ENCODE measurements at regions of chr22 and their contacts with region 1.

Region 1: DNA sequence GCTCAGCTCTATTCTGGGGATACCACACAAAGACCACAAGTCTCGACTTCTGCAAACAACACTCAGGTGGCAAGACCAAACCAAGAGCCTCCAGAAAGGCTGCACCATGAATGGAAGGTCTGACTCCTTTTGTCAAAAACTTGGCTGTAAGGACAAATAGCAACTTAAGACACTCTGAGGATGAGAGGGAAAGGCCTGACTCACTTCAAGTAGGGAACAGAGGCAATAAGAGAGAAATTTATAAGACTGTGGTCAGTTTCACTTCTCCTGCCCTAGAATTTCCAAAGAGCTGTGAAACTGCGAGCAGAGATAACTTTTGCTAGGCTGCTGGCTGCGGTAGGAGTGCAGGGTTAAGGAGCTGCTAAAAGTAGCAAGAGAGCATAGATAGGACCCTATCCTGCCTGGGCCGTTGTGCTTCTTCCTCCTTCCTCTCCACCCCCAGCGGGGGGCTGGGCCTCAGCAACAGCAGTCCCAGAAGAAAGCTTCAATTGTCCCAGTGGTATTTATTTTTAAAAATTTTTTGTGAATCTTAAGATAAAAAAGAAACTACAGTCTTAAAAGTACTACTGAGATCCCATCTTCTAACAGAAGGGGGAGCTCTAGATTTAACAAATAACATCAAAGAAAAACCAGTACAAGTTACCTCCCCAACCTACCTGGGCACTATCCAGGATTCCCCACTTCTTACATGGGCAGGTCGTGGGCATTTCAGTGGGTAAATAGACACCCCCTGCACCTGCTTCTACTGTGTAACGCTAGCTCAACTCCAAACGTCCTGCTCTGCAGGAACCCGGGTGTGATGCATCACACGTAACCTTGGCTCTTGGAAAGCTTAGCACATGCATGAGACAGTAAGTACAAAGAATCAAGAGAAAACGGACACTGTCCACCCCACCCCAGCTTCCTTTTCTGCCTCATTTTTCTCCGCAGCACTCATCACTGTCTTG is 66.4 kb downstream of the SGSM3 start:
- DNase-seq: peak; percentile 88
- ATAC-seq: peak; percentile 87
- H3K4me3 ChIP-seq: peak overlapping the region; percentile 50
- H3K27ac ChIP-seq: peak overlapping the region; percentile 84
- H3K4me1 ChIP-seq: peaks cover 72% of the 10 kb centered on the region
- H3K27me3 ChIP-seq: no peaks in the 10 kb centered on the region
- CTCF ChIP-seq: peak; percentile 45 to 52 (median 49); a peak in 5 of 6 replicates
- EP300 ChIP-seq: peak in 1 of 2 experiments; percentile 51; a peak in 3 of 4 replicates
- POLR2A ChIP-seq: no peak
- RAD21 ChIP-seq: peak; percentile 61

Region 2: DNA sequence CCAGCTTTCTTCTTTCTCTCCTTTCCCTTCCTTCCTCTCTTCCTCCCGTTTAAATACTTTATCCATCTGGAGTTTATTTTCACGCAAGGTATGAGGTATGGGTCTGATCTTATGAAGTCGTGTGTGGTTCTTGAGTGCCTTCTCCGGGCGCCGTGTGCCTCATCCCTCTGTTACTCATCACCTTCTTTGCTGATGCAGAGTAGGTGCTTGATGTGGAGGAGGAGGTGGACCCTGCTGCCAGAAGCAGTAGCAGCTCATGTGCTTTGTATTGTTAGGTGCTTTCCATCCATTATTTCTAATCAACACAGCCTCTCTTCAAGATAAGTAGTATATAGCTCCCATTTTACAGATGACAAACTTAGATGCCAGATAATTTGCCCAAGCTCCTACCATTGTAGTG is 212.1 kb before region 1 on chr22:
- CTCF ChIA-PET with region 1: no interaction called
- POLR2A ChIA-PET with region 1: no interaction called
- RAD21 ChIA-PET with region 1: no interaction called
- SMC1A ChIA-PET with region 1: no interaction called
- in situ Hi-C with region 1: no loop called
- intact Hi-C with region 1: no loop called
- DNase-seq: no peak
- ATAC-seq: no peak
- H3K4me3 ChIP-seq: no peak overlapping the region
- H3K27ac ChIP-seq: no peak overlapping the region
- H3K4me1 ChIP-seq: no peaks in the 10 kb centered on the region
- H3K27me3 ChIP-seq: no peaks in the 10 kb centered on the region
- CTCF ChIP-seq: no peak
- EP300 ChIP-seq: no peak
- POLR2A ChIP-seq: no peak
- RAD21 ChIP-seq: no peak

Region 3: DNA sequence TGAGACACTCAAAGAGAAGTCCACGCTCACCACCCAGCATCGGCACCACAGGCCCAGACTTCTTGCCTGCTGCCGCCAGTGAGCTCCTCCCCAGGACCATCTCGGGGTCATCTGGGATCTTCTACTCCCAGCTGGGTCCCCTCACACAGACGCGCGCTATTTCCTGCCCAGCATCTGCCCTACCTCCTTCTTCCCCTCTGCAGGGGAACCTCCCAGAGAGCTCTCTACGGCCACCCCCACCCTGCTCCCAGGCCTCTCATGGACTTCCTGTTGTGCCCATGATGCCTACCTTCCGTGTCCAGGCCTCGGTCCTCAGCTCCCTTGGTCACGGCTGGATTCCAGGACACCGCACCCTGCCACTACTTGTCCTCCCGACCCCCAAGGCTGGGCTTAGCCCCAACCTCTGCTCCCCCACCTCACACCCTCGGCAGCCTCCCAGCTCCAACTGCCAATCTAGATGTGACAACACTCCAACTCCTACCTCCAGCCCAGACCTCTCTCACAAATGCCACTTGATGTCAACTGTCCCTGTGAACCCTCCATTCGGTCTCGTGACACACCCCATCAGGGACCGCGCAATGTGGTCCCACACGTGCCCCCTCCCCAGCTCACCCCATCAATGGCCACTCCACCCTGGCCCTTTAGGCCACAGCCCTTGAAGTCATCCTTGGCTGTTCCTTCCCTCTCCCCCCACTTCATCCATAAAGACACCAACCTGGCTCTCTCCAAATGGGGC is 21.1 kb before region 1 on chr22:
- CTCF ChIA-PET with region 1: interaction called, 19 read pairs
- POLR2A ChIA-PET with region 1: interaction called, 13 read pairs
- RAD21 ChIA-PET with region 1: interaction called, 32 read pairs
- SMC1A ChIA-PET with region 1: interaction called, 21 read pairs
- in situ Hi-C with region 1: no loop called
- intact Hi-C with region 1: loop called (anchors 2 kb)
- DNase-seq: no peak
- ATAC-seq: peak; percentile 59
- H3K4me3 ChIP-seq: peak overlapping the region; percentile 49
- H3K27ac ChIP-seq: peak overlapping the region; percentile 71
- H3K4me1 ChIP-seq: peaks cover 44% of the 10 kb centered on the region
- H3K27me3 ChIP-seq: no peaks in the 10 kb centered on the region
- CTCF ChIP-seq: no peak
- EP300 ChIP-seq: no peak
- POLR2A ChIP-seq: no peak; the same call in none of the 2 replicates
- RAD21 ChIP-seq: no peak

Region 4: GRCh38 chr22:40468616-40469015 is 31.8 kb after region 1 on chr22:
- CTCF ChIA-PET with region 1: interaction called, 17 read pairs
- POLR2A ChIA-PET with region 1: interaction called, 3 read pairs
- RAD21 ChIA-PET with region 1: interaction called, 16 read pairs
- SMC1A ChIA-PET with region 1: interaction called, 30 read pairs
- in situ Hi-C with region 1: no loop called
- intact Hi-C with region 1: loop called (anchors 2 kb)
- DNase-seq: no peak
- ATAC-seq: no peak
- H3K4me3 ChIP-seq: no peak overlapping the region
- H3K27ac ChIP-seq: no peak overlapping the region
- H3K4me1 ChIP-seq: no peaks in the 10 kb centered on the region
- H3K27me3 ChIP-seq: no peaks in the 10 kb centered on the region
- CTCF ChIP-seq: no peak
- EP300 ChIP-seq: no peak
- POLR2A ChIP-seq: no peak
- RAD21 ChIP-seq: no peak

Region 5: DNA sequence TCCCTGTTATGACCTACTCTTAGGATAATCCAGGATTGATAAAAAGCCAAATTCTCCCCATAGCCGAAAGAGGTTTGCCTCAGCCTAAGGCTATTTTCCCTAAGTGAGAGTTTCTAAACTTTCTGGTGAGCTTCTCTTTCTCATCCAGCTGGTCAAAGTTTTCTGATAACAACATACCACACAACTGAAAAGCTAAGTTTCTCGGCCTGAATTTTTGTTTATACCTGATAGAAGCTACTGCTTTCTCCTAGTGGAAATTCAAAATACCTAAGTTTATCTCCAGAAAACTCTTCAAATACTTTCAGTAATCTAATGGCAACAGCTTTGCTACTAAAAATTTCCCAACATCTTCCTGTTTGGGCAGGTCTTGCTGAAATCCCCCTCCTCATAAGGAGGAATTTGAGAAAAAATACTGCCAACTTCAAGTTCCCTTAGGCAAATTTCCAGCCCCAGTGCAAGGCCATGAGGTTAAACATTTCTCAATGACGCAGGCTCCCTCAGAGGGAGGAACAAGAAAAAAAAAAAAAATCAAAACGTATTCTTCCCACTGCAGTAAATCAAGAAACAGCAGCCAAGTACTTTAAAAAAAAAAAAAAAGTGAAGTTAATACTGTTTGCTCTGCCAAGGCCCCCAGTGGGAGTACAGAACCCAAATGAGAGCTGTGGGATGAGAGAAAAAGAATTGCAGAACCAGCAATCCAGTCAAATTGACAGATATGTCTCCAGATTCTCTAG is 72.8 kb after region 1 on chr22:
- CTCF ChIA-PET with region 1: interaction called, 12 read pairs
- POLR2A ChIA-PET with region 1: interaction called, 3 read pairs
- RAD21 ChIA-PET with region 1: interaction called, 6 read pairs
- SMC1A ChIA-PET with region 1: interaction called, 5 read pairs
- in situ Hi-C with region 1: no loop called
- intact Hi-C with region 1: no loop called
- DNase-seq: no peak
- ATAC-seq: peak; percentile 73
- H3K4me3 ChIP-seq: no peak overlapping the region
- H3K27ac ChIP-seq: peak overlapping the region; percentile 10
- H3K4me1 ChIP-seq: peaks cover 10% of the 10 kb centered on the region
- H3K27me3 ChIP-seq: no peaks in the 10 kb centered on the region
- CTCF ChIP-seq: no peak
- EP300 ChIP-seq: no peak
- POLR2A ChIP-seq: no peak
- RAD21 ChIP-seq: no peak

Region 6: DNA sequence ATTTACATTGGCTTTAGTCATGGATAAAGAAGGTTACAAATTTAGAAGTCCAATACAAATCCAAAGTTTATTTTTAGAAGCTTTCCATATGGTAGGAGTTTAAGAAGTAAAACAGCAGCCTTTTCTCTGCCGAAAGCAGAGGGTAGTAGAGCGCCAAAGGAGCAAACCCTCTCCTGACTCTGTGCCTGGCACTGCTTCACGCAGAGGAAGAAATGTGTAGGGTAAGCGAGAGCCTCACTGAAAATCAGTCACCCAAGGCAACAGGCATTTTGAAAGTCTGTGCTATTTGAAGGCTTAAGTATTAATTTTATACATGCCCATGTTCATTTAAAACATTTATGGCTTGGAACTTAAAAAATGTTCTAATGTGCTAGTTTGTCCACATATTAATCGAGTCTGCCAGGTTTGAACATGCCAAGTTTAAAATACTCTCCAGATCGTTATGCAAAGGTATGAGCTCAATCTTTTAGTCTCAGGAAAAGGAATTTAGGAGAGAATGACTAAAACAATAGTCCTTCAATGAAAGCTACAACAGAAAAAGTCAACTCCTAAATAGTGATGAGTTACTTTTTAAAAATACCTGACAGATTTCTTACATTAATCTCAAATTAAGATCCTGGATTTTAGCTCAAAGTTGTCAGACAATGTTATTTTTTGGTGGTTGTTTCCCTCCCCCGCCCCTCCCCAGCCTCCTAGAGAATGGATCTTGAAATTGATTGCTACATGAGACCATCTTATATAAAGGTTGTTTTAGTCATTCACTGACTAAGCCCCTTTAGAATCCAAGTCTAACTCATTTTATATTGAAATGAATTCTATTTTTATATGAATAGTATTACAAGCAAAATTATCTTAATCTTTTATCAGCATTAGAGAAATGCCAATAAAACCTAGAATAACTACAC is 161.0 kb after region 1 on chr22:
- CTCF ChIA-PET with region 1: interaction called, 6 read pairs
- POLR2A ChIA-PET with region 1: no interaction called
- RAD21 ChIA-PET with region 1: interaction called, 13 read pairs
- SMC1A ChIA-PET with region 1: interaction called, 16 read pairs
- in situ Hi-C with region 1: no loop called
- intact Hi-C with region 1: no loop called
- DNase-seq: no peak
- ATAC-seq: no peak
- H3K4me3 ChIP-seq: no peak overlapping the region
- H3K27ac ChIP-seq: no peak overlapping the region; the same call in 1 of the 2 replicates
- H3K4me1 ChIP-seq: peaks cover 54% of the 10 kb centered on the region
- H3K27me3 ChIP-seq: no peaks in the 10 kb centered on the region
- CTCF ChIP-seq: 0 out of 6 replicates have a peak, but pooled peaks of 1 of the 3 experiments have one; percentile 0
- EP300 ChIP-seq: no peak
- POLR2A ChIP-seq: no peak
- RAD21 ChIP-seq: no peak

Region 7: GRCh38 chr22:40679964-40680818 is 243.4 kb after region 1 on chr22:
- CTCF ChIA-PET with region 1: interaction called, 4 read pairs
- POLR2A ChIA-PET with region 1: no interaction called
- RAD21 ChIA-PET with region 1: interaction called, 12 read pairs
- SMC1A ChIA-PET with region 1: interaction called, 9 read pairs
- in situ Hi-C with region 1: no loop called
- intact Hi-C with region 1: no loop called
- DNase-seq: no peak
- ATAC-seq: no peak
- H3K4me3 ChIP-seq: no peak overlapping the region
- H3K27ac ChIP-seq: no peak overlapping the region
- H3K4me1 ChIP-seq: no peaks in the 10 kb centered on the region
- H3K27me3 ChIP-seq: peaks cover 0 to 3% of the 10 kb centered on the region in 2 experiments; a peak in 3 of 4 replicates
- CTCF ChIP-seq: no peak
- EP300 ChIP-seq: no peak
- POLR2A ChIP-seq: no peak
- RAD21 ChIP-seq: no peak